AG04449 (cell line): ENCODE measurements at regions of chr12 and their contacts with region 1.

Region 1: GRCh38 chr12:27014085-27014858 is at the start of gene TM7SF3:
- DNase-seq: no peak
- H3K4me3 ChIP-seq: peak within 1 kb of the TSS; percentile 78
- CTCF ChIP-seq: peak; percentile 73

Region 2: DNA sequence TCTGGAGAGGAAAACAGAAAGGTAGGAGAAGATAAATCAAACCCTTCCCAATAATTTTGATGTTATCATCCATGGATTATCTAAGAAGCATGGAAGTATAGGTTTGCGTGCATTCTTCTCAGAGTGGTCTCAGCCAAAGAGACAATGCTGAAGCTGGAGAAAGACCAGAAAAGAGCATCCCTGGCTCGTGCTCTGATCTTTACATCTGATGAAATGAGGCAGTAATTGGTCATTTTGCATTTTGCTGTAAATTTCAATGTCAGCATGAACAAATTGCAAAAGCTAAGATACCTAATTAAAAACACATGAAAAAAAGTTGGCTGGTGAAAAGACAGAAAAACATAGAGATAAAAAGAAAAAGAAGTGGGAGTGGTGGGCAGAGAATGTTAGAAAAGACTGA is 433.7 kb before region 1 on chr12:
- CTCF ChIA-PET with region 1: no interaction called
- POLR2A ChIA-PET with region 1: no interaction called
- DNase-seq: no peak
- H3K4me3 ChIP-seq: no peak overlapping the region
- CTCF ChIP-seq: no peak

Region 3: DNA sequence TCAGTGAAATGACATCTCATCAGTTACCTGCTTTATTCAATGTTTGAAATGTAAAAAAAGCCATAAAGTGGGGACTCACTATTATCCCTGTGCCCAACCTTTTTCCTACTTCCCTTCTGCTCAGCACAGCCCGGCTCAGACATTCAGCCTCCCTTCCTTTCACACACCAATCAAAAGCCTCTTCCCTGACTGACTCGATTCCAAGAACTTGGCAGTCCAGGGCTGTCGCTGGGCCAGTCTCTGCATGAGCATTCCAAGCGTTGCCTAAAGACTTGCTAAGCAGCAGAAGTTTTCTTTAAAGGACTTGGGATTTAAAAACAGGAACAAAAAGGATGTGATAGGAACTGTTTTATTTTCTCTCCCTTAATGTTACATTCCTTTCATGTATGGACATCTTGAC is 203.9 kb before region 1 on chr12:
- CTCF ChIA-PET with region 1: no interaction called
- POLR2A ChIA-PET with region 1: no interaction called
- DNase-seq: peak; percentile 65
- H3K4me3 ChIP-seq: no peak overlapping the region
- CTCF ChIP-seq: no peak

Region 4: DNA sequence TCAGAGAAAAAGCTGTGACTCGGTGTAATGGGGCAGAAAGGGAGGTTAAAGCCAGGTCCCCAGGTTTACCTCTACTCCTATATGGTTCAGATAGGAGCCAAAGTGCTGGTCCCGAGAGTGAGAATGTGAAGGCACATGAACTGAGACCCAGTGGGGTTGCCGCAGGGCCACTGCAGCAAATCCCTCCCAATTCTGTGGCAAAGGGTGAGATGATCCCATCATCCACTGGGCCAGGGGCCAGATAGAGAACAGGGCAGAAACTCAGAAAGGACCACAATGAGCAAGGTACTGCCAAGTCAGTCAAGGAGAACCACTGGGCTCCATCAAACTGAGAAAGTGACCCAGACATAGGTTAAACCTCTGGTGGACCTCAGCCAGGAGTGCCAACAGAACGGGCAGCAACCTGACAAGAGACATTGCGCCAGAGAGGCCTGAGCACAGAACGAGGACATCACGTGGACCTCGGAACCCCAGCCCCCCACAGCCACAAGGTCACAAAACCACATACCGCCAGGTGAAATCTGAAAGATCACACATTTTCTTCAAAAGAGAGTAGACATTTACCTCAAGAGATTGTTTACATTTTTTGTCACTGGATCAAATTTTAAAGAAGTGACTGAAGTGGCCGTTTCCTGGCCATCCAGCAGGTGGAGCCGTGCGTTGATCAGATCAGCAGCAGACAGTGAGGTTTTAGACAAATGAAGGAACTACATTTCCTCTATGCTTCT is 160.8 kb before region 1 on chr12:
- CTCF ChIA-PET with region 1: interaction called, 14 read pairs
- POLR2A ChIA-PET with region 1: no interaction called
- DNase-seq: no peak
- H3K4me3 ChIP-seq: no peak overlapping the region
- CTCF ChIP-seq: peak; percentile 77

Region 5: DNA sequence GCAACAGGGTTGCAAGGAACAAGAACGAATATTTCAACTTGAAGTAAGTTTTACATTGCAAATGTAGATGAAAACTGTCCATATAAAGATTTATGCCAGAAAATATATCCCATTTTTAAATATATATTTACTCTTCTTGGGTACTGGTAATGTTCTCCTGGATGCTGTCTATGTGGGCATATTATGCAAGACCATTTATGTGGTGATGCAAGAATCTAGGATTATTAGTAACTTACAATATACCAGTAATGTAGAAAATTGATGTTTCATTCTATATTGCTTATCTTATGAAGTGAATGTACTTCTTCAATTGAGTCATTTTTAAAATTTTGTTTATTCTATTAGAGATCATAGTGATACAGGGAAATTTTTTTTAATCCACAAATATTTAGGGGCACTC is 50.9 kb before region 1 on chr12:
- CTCF ChIA-PET with region 1: interaction called, 12 read pairs
- POLR2A ChIA-PET with region 1: no interaction called
- DNase-seq: no peak
- H3K4me3 ChIP-seq: no peak overlapping the region
- CTCF ChIP-seq: no peak

Region 6: GRCh38 chr12:27003421-27004381 is 10.6 kb before region 1 on chr12:
- CTCF ChIA-PET with region 1: interaction called, 101 read pairs
- POLR2A ChIA-PET with region 1: no interaction called
- DNase-seq: no peak
- H3K4me3 ChIP-seq: no peak overlapping the region
- CTCF ChIP-seq: no peak

Region 7: DNA sequence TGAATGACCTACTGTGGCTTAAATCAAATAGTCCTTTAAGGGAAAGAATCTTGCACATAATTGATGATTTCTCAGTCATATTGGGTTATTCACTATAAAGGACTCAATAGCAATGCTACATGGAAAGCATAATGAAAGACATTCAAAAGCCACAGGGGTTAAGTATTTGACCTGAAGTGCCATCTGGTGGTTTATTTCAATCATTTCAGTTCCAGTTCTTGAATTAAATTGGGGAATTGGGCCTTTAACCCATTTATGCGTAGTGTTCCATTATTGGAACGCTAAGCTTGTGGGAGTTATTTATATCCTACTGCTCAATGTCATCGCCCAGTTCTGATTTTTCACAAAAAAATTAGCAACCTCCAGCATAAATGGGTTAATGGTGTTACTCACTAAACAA is 109.4 kb after region 1 on chr12:
- CTCF ChIA-PET with region 1: interaction called, 16 read pairs
- POLR2A ChIA-PET with region 1: no interaction called
- DNase-seq: no peak
- H3K4me3 ChIP-seq: no peak overlapping the region
- CTCF ChIP-seq: no peak

Region 8: DNA sequence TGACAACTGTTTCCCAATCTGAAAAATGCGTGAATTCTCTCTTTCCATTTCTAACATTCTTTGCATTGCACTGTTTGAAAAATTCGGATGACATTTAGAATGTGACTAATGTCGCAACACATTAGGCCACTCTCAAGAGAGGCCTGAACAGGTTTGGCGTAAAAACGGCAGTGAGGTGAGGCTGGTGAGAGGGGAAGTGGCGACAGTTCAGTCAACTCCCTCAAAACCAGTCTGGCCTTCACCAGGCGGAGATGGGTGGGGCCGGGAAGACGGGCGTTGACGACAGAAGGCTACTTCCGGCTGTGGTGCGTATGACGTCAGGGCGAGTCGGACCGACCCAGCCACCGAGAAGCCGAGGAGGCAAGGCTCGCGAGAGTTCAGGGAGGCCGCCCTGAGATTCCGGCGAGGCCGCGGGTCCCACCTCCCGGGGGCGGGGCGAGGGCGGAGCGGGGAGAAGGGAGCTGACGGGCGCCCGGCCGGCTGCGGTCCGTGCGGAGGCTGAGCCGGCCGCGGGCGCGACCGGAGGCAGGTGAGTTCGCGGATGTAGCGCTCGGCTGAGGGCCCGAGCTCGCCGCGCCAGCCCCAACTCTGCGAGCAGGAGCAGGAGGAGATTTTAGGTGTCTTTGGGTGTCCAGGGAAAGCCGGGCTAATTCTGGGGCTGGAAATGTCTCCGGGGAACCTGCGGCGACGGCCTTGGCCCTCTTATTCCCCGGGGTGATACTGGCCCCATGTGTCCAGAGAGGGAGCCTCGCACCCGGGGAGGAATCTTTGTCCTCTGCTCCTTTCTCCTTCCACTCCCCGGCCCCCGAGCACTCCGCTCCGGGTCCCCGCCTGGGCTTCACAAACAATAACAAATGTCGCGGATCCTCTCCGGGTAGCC is 229.8 kb after region 1 on chr12 and contains the start of gene STK38L:
- CTCF ChIA-PET with region 1: interaction called, 20 read pairs
- POLR2A ChIA-PET with region 1: no interaction called
- DNase-seq: peak; percentile 57
- H3K4me3 ChIP-seq: peak within 1 kb of the TSS; percentile 79
- CTCF ChIP-seq: peak; percentile 44

Region 9: DNA sequence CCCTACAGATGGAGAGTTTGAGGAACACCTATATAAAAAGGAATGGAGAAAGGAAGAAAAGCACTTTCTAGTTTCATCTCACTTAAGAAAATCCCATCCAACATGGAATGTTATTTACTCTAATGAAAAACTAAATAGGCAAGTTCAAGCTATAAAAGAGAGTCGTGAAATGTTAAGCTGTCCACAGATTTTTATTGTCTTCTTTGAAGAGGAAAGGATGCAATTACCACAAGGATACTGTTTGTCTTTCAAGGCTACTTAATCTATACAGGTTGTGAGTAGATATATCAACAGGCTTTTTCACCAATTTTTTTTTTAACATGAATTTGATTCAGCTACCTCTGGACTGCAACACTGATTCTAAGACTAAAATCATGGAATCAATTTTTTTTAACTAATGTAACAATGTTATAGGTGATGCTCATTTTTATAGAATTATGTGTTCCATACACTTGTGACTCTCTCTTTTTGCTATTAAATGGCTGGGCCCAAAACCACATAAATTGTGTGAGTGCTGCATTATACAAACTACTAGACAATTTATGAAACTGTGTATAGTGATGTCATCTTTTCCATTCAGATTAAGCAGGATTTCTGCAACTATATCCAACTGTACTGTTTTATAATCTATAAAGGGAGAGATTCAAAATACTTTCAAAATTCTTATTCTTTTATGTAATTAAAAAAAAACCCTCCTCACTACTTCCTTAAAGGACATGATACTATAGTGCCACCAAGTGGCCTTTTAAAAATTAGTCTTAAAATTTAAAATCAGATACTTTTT is 291.6 kb after region 1 on chr12:
- CTCF ChIA-PET with region 1: interaction called, 230 read pairs
- POLR2A ChIA-PET with region 1: no interaction called
- DNase-seq: no peak
- H3K4me3 ChIP-seq: no peak overlapping the region
- CTCF ChIP-seq: peak; percentile 2